ENCODE measurements at regions of chr11 and their contacts with region 1.

Region 1: DNA sequence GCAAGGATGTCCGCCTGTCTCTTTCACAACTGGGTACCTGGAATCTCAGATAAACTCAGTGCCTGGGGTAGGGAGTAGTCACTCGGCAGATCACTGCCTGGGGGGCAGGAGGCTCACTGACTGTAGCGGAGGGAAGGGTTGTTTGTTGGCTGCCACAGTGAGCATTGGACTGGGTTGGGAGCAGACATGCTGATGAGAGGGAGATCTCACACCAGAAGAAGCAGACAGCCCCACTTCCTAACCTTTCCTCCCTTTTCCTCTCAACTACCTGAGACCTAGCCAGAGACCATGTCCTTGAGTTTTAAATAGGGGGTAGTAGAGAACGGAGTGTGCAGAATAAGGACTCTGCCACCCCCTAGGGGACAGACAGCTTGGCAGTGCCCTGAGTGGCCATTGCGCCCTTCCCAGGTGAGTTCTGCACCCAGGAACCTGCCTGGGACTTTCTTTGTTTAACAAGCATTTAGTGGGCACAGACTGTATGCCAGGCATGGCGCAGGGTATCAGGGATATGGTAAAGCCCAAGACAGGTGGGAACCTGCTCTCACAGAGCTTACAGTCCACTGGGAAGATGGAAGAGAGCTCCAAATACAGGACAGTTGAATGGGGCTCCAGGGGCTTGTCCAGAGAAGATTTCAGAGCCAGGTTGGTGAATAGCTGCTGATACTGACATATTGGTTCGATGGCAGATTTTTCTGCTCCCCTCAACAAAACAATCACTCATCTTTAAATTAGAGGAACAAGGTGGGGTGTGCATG is 115.7 kb upstream of the NNMT start:
- DNase-seq: peak in 4 of 5 donors; percentile 59 to 71 (median 70)
- ATAC-seq: peak; percentile 29 to 76 (median 60)
- H3K4me3 ChIP-seq: peak overlapping the region in 8 of 12 donors; percentile 8 to 38 (median 28)
- H3K27ac ChIP-seq: peak overlapping the region; percentile 80 to 100 (median 96)
- H3K4me1 ChIP-seq: peaks cover 40 to 96% (median 80%) of the 10 kb centered on the region in 12 donors
- H3K27me3 ChIP-seq: no peaks in the 10 kb centered on the region
- CTCF ChIP-seq: peak; percentile 52 to 82 (median 68)
- POLR2A ChIP-seq: no peak

Region 2: DNA sequence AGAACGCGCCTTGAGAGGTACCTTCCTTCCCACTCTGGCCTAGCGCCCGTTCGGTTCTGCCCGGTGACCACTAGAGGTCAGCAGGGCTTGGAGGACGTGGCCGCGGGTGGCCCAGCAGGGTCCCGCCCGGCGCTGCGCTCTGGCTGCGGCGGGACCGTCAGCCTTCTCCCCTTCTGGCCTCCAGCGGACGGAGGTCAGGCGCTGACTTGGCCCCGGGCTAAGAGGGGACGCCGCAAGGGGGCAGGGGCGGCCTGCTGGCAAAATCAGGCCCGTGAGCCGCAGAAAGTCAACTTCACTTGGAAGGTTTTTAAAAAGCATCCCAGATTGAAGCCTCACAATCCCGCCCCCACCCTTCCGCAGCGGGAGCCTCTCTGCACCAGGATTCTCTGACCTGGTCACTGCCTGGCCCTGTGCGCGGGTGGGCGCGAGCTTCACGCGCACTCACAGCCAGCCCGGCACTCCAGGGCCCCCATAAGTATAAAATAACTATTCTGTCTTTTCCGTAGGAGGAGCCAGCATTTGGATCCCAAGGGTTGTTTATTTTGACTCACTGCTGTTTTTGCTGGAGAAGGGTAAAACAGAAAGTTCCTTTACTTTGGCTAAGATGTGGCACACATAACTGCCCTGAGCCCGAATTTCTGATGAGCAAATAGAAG is 144.2 kb before region 1 on chr11:
- intact Hi-C with region 1: loop called in 9 of 10 experiments (anchors 1 to 5 kb)
- DNase-seq: peak; percentile 83 to 93 (median 91)
- ATAC-seq: peak; percentile 84 to 96 (median 94)
- H3K4me3 ChIP-seq: peak overlapping the region in 10 of 12 donors; percentile 26 to 60 (median 48)
- H3K27ac ChIP-seq: peak overlapping the region in 10 of 12 donors; percentile 50 to 88 (median 75)
- H3K4me1 ChIP-seq: peaks cover 4 to 30% (median 11%) of the 10 kb centered on the region in 12 donors
- H3K27me3 ChIP-seq: no peaks in the 10 kb centered on the region
- CTCF ChIP-seq: peak; percentile 85 to 96 (median 94)
- POLR2A ChIP-seq: peak in 1 of 2 donors; percentile 39

Region 3: DNA sequence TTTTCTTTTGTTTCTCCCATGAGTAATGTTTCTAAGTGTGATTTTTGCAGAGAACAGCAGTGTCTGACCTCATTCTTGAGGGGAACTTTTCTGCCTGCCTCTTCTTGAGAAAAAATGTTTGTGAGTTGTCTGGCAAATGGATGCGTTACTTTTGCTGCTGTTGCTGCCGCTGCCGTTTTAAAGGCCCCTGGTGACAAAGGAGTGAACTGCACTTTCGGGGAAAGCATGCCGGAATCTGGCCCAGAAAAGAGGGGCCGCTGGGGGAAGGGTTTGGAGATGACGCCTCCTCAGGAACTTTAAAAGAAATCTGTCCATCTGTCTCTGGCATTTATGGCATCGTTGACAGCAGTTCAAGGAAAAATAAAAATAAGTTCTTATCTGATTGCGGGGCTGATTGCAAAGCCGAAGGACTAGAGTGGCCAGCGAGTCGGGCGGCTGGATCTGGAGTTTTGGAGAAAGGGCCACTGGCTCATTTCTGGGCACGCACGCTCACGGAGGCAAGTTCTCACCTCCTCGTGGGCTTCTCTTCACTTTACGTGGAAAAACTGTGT is 104.5 kb before region 1 on chr11:
- intact Hi-C with region 1: loop called in 1 of 10 experiments (anchors 5 kb)
- DNase-seq: peak in 4 of 5 donors; percentile 46 to 56 (median 52)
- ATAC-seq: peak in 2 of 4 donors; percentile 1 to 2
- H3K4me3 ChIP-seq: peak overlapping the region in 8 of 12 donors; percentile 8 to 29 (median 18)
- H3K27ac ChIP-seq: peak overlapping the region in 10 of 12 donors; percentile 1 to 92 (median 81)
- H3K4me1 ChIP-seq: peaks cover 34 to 100% (median 97%) of the 10 kb centered on the region in 12 donors
- H3K27me3 ChIP-seq: no peaks in the 10 kb centered on the region
- CTCF ChIP-seq: peak; percentile 46 to 74 (median 59)
- POLR2A ChIP-seq: peak in 1 of 2 donors; percentile 8

Region 4: DNA sequence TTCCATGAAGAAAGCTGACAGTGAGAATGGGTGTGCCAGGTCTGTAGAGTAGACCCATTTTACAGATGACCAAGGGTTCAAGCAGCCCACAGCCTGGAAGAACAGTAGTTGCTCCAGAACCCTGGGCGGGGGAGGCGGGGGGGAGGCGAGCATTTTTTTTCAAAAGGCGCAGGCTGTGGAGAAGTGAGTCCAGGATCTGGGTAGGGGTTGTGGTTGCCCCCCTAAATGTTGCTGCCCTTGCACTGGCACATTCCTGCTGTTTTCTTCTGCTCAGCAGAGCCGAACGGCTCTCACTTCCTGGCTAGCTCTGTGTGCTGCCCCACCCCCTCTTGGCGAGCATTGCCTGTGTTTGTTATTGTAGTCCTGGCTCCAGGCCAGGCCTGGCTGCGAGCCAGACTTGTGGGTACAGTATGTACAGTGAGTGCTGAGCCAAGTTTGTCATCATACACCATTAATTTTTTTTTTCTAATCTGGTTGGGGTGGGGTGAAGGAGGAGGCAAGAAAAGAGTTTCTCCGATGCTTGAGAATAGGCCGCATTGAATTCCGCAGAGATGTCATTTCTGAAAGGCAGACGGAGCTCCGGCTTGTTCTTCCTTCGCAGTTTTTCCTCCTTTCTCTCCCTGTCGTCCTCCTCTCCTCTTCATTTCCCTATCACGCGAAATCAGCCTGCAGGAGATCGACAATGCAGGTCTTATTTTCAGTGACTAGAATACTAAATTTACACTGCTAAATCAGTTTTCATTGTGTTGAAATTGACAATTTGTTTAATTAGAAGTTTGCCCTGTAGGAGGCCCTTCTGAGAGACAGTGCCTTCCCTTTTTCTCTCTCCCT is 20.5 kb before region 1 on chr11:
- intact Hi-C with region 1: loop called in 6 of 10 experiments (anchors 1 to 2 kb)
- DNase-seq: peak; percentile 98 to 100 (median 99)
- ATAC-seq: peak; percentile 65 to 80 (median 72)
- H3K4me3 ChIP-seq: peak overlapping the region in 11 of 12 donors; percentile 18 to 46 (median 33)
- H3K27ac ChIP-seq: peak overlapping the region; percentile 87 to 100 (median 98)
- H3K4me1 ChIP-seq: peaks cover 54 to 99% (median 90%) of the 10 kb centered on the region in 12 donors
- H3K27me3 ChIP-seq: no peaks in the 10 kb centered on the region
- CTCF ChIP-seq: peak in 1 of 12 donors; percentile 9
- POLR2A ChIP-seq: peak; percentile 33 to 79

Region 5: DNA sequence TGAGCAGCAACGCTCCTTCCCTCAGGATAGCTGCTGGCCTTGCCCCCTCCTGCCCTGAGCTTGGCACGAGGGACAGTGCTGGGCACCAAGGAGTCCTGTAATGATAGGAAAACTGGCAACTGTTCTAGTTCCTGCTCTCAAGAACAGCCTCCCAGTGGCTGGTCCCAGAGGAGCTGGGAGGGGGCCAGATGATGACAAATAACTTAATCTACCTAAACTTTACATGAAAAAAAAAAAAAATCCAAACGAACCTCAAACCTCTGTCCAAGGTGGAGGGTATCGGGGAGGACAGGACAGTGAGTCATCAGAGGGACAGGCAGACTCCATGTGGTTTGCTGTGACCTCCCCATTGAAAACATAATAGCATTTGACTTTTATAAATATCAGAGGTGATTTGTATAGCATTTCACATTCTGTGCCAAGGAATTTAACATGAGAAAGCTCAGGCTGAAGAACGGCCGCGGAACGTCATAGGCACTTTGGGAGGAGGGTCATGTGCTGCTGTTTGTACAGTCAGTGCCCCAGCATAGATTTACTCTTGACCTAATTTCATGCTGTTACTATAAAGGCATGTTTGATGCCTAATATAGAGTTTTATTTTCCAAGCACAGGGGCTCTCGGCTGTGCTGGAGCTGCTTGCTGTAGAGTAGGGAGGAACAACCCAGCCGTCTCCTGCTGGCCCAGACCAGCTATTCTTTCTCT is 17.5 kb after region 1 on chr11:
- intact Hi-C with region 1: loop called in 2 of 10 experiments (anchors 1 to 2 kb)
- DNase-seq: peak; percentile 78 to 92 (median 81)
- ATAC-seq: peak; percentile 77 to 91 (median 84)
- H3K4me3 ChIP-seq: peak overlapping the region in 1 of 12 donors; percentile 3
- H3K27ac ChIP-seq: peak overlapping the region; percentile 76 to 97 (median 90)
- H3K4me1 ChIP-seq: peaks cover 27 to 99% (median 85%) of the 10 kb centered on the region in 12 donors
- H3K27me3 ChIP-seq: no peaks in the 10 kb centered on the region
- CTCF ChIP-seq: peak in 1 of 12 donors; percentile 18
- POLR2A ChIP-seq: peak in 1 of 2 donors; percentile 72

Region 6: DNA sequence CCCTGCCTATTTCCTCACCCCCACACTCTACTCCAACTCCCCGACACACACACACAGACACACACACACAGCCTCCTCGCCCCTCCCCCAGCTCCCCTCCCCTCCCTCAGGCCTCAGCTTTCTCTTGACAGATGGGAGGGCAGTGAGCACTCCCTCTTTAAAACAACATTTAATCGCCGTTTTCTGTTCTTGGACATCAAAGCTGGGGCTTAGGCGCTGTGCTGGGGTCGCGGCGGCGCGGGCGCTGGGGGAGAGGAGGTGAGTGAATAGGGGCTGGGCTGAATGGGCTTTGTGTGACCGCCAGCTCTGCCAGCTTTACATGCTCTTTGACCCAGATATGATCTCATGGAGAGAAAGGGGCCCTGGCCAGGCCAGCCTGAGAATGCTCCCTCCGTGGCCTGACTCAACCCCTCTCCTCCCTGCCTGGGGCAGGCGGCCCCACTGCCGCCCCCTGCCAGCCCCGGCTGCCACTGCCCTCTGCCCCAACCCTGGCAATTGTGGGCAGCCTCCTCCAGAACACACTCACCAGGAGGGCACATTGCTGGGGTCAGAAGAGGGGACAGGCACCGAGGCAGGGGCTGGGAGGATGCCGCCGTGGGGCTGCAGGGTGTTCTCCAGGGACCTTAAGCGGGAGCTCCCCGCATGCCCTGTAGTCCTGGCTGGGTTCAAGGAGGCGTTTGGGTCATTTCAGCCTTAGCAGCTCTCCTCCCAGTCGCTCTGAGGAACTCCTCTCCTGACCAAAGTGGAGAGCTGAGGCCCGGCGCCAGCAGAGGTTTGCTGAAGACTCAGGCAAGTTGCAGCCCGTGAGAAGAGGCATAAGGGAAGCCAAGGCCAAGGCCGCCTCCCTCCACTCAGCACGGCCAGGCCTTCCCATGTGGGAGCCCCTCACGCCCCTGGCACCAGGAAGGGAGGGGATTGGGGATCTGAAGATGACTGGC is 77.4 kb after region 1 on chr11:
- intact Hi-C with region 1: loop called in 8 of 10 experiments (anchors 5 kb)
- DNase-seq: peak; percentile 39 to 76 (median 69)
- ATAC-seq: peak; percentile 13 to 68 (median 52)
- H3K4me3 ChIP-seq: peak overlapping the region in 9 of 12 donors; percentile 5 to 39 (median 26)
- H3K27ac ChIP-seq: peak overlapping the region; percentile 47 to 85 (median 75)
- H3K4me1 ChIP-seq: peaks cover 0 to 87% (median 47%) of the 10 kb centered on the region in 12 donors
- H3K27me3 ChIP-seq: no peaks in the 10 kb centered on the region
- CTCF ChIP-seq: peak in 8 of 12 donors; percentile 21 to 55 (median 36)
- POLR2A ChIP-seq: no peak

Measured in heart left ventricle (tissue), 16 donors.